Activated CD4-positive, alpha-beta memory T cell treated with anti-CD3 and anti-CD28 coated beads for 36 hours (primary cell): ENCODE measurements at regions of chr11 and their contacts with region 1.

Region 1: GRCh38 chr11:107538821-107539220 is 26.7 kb downstream of the ALKBH8 start:
- DNase-seq: no peak
- H3K4me3 Mint-ChIP-seq: no peak overlapping the region
- H3K27ac Mint-ChIP-seq: no peak overlapping the region
- H3K4me1 Mint-ChIP-seq: no peaks in the 10 kb centered on the region
- H3K27me3 Mint-ChIP-seq: no peaks in the 10 kb centered on the region

Region 2: GRCh38 chr11:107482234-107482633 is 56.6 kb before region 1 on chr11:
- CTCF ChIA-PET with region 1: no interaction called
- POLR2A ChIA-PET with region 1: no interaction called
- intact Hi-C with region 1: no loop called
- DNase-seq: no peak
- H3K4me3 Mint-ChIP-seq: no peak overlapping the region
- H3K27ac Mint-ChIP-seq: no peak overlapping the region
- H3K4me1 Mint-ChIP-seq: no peaks in the 10 kb centered on the region
- H3K27me3 Mint-ChIP-seq: peaks cover 17% of the 10 kb centered on the region

Region 3: DNA sequence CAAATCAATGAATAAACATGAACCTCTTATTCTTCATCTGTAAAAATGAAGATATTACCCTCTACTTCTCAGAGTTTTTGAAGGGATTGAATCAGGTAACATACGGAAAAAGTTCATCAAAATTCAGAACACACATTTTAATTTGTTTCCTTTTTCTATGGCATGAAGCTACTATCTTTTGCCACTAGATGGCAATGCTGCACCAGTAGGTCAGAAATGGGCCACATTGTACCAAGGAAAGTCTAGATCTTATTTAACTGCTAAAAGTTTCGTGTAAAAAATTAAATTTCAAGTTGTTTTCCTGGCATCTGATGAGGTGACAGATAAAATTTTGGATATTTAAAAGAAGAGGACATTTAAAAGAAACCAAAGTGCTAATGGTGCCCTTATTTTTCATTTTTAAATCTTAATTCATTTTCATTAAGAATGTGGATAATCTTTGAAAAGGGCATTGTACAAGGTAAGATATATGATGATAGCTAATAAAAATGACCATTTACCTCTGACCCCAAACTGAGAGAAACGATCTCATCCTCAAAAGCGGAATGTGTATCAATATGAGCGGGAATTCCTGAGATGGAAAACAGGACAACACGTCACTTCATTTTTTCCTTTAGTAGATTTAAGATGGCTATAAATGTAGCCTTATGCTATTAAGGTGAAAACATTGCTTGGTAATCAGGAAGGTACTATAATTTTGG is 10.6 kb after region 1 on chr11:
- CTCF ChIA-PET with region 1: interaction called, 17 read pairs
- POLR2A ChIA-PET with region 1: no interaction called
- intact Hi-C with region 1: no loop called
- DNase-seq: peak; percentile 40
- H3K4me3 Mint-ChIP-seq: no peak overlapping the region
- H3K27ac Mint-ChIP-seq: no peak overlapping the region
- H3K4me1 Mint-ChIP-seq: peaks cover 10% of the 10 kb centered on the region
- H3K27me3 Mint-ChIP-seq: no peaks in the 10 kb centered on the region

Region 4: GRCh38 chr11:107562647-107563208 is 23.9 kb after region 1 on chr11:
- CTCF ChIA-PET with region 1: no interaction called
- POLR2A ChIA-PET with region 1: no interaction called
- intact Hi-C with region 1: no loop called
- DNase-seq: no peak
- H3K4me3 Mint-ChIP-seq: no peak overlapping the region
- H3K27ac Mint-ChIP-seq: peak overlapping the region; percentile 59
- H3K4me1 Mint-ChIP-seq: peaks cover 45% of the 10 kb centered on the region
- H3K27me3 Mint-ChIP-seq: no peaks in the 10 kb centered on the region